ENCODE measurements at regions of chr4 and their contacts with region 1.

Region 1: GRCh38 chr4:146095091-146095690 is 80.3 kb upstream of the LSM6 start:
- H3K4me3 Mint-ChIP-seq: no peak overlapping the region
- H3K27ac Mint-ChIP-seq: no peak overlapping the region
- H3K4me1 Mint-ChIP-seq: peaks cover 15% of the 10 kb centered on the region
- H3K27me3 Mint-ChIP-seq: peaks cover 6% of the 10 kb centered on the region

Region 2: DNA sequence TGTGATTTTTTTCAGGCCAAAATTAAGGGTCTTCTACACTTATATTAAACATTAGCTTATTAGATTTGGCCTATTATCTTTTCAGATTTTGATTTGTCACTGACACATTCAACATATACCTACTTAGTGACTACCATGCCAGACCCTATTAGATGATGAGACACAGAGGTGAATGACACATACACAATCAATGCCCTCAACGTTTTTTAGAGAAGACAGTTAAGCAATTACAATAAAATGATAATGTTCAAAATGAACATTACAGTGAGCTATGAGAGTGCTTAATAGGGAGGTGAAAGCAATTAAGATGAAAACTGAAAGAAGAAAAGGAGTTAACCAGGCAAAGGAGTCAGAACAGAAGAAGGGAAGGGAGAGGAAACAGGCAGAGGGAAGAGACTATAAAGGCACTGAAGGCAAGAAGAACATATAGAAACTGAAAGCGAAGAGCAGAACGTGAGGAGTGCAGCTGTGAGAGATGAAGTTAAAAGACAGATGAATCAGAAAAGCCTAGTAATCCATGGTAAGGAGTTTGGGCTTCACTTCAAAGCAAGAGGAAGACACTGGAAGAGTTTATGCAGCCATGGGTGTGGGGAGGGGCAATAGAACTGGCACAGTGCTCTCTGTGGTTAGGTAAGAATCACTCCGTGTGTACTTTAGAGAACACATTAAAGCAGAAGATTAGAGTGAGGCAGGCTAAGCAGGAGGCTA is 238.2 kb after region 1 on chr4:
- intact Hi-C with region 1: loop called (anchors 10 kb)
- H3K4me3 Mint-ChIP-seq: no peak overlapping the region
- H3K27ac Mint-ChIP-seq: no peak overlapping the region
- H3K4me1 Mint-ChIP-seq: peaks cover 10% of the 10 kb centered on the region
- H3K27me3 Mint-ChIP-seq: no peaks in the 10 kb centered on the region

Region 3: DNA sequence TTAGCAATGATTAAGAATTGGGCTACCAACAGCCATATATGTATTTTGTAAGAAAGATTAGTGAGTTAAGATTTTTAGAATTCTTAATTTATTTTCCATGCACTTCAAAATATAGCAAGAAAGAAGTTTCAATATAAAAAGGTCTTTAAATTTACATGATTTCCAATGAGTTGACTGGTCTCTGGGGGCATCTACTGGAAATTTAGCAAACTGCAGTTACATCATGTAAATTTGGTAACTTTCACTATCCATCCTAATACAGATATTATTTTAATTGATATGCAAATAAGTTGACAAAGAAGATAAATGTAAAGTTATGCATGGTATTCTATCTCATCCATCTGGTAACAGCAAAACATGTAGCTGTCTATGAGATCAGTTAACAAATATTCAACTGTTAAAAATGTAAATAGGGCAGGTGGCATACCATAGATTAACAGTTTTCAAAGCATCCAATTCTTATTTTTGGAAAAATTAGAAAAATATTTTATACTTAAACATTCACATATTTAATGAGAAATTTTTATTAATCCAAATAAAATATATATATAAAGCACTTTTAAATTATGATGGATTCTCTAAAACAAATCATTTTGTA is 821.4 kb after region 1 on chr4:
- intact Hi-C with region 1: loop called (anchors 5 kb)
- H3K4me3 Mint-ChIP-seq: no peak overlapping the region
- H3K27ac Mint-ChIP-seq: no peak overlapping the region
- H3K4me1 Mint-ChIP-seq: no peaks in the 10 kb centered on the region
- H3K27me3 Mint-ChIP-seq: peaks cover 1% of the 10 kb centered on the region

Measured in dendritic cell treated with granulocyte-macrophage colony-stimulating factor and Interleukin-4, amounts not matched to agents 40 ng/mL and 50 ng/mL, for 4 days (primary cell).